Caco-2 (cell line): ENCODE measurements at regions of chr12 and their contacts with region 1.

Region 1: DNA sequence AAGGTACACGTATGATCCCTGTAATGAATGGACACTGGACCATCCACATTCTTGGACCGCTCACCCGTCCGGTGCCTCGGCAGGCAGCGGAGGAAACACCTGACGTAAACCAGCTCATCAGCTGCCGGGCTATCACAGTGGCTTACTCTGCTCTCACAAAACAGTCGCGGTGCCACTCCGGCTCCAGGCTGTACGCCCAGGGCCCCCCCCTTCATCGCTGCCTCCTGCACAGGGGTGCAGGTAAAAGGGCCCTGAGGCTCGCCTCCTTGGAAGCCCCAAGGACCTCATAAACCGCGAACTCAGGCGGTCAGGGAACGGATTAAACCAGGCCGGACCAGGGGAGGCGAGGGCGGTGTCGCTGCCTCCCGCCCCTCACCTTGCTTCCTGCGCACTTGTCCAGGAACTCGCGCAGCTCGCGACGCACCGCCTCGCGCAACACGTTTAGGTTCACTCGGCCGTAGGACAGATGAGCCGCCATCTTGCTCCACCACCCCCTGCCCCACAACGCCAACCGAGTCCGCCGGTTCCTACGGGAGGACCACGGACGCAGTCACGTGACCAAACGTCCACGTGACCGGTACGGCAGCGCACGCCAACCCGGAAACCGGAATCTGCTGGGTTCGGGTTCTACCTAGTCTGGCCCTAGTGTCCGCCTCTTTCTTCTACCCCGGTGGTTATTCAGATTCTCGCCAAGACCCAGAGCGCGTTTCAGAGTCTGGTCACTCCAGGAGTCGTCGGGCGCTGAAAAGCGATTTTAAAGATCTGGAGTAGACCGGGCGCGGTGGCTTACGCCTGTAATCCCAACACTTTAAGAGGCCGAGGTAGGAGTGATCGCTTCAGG is at the start of gene VPS33A:
- DNase-seq: peak; percentile 97 to 99
- H3K4me3 ChIP-seq: peak within 1 kb of the TSS; percentile 65
- H3K4me3 Mint-ChIP-seq: peak within 1 kb of the TSS; percentile 83
- H3K27ac Mint-ChIP-seq: peak within 1 kb of the TSS; percentile 96
- H3K4me1 ChIP-seq: no peaks in the 10 kb centered on the region
- H3K4me1 Mint-ChIP-seq: no peaks in the 10 kb centered on the region
- H3K27me3 ChIP-seq: no peaks in the 10 kb centered on the region
- H3K27me3 Mint-ChIP-seq: no peaks in the 10 kb centered on the region
- CTCF ChIP-seq: no peak
- total RNA-seq, gene VPS33A: 34.9 and 36.5 TPM in 2 replicates

Region 2: GRCh38 chr12:122642009-122642408 is 375.9 kb after region 1 on chr12:
- CTCF ChIA-PET with region 1: interaction called, 10 read pairs
- POLR2A ChIA-PET with region 1: no interaction called
- intact Hi-C with region 1: no loop called
- DNase-seq: no peak
- H3K4me3 ChIP-seq: no peak overlapping the region
- H3K4me3 Mint-ChIP-seq: no peak overlapping the region
- H3K27ac Mint-ChIP-seq: no peak overlapping the region
- H3K4me1 ChIP-seq: no peaks in the 10 kb centered on the region
- H3K4me1 Mint-ChIP-seq: no peaks in the 10 kb centered on the region
- H3K27me3 ChIP-seq: no peaks in the 10 kb centered on the region
- H3K27me3 Mint-ChIP-seq: no peaks in the 10 kb centered on the region
- CTCF ChIP-seq: no peak